ENCODE measurements at regions of chr14 and their contacts with region 1.

Region 1: GRCh38 chr14:77469539-77469938 is 11.6 kb downstream of the AHSA1 start:
- DNase-seq: no peak
- H3K4me3 ChIP-seq: no peak overlapping the region
- H3K27ac ChIP-seq: no peak overlapping the region
- H3K4me1 ChIP-seq: no peaks in the 10 kb centered on the region
- H3K27me3 ChIP-seq: no peaks in the 10 kb centered on the region
- CTCF ChIP-seq: no peak
- POLR2A ChIP-seq: no peak

Region 2: DNA sequence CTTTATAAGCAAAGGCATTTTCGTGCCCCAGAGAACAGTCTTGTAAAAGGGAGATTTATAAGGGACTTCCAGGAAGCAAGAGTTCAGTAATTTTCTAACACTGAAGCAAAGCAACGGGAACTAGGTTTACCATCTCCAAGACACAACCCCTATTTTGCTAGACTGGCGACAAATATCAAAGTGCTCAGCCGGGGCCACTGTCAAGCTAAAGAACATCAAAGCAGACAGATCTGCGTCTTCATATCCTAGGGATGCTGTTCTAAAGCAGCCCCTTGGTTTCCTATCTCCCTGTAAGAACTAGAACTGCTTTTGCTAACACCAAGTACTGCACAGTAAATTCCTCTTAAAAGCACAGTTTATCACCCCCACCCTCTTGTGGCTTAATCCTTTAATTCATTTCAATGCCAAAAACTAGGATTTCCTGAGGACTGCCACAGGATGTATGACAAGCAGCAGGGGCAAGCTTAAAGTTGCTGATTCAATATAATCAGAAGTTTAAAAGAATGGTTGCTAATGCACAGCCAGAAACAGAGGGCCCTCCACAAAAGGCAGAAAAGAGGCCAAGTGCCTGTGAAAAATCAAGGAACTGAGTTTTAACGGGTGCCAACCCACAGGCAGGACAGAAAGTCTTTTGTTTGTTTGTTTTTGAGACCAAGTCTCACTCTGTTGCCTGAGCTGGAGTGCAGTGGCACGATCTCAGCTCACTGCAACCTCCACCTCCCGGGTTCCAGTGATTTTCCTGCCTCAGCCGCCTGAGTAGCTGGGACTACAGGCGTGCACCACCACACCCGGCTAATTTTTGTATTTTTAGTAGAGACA is 73.1 kb after region 1 on chr14:
- intact Hi-C with region 1: loop called (anchors 5 kb)
- DNase-seq: no peak
- H3K4me3 ChIP-seq: no peak overlapping the region
- H3K27ac ChIP-seq: peak overlapping the region; percentile 63 to 73
- H3K4me1 ChIP-seq: peaks cover 24% of the 10 kb centered on the region
- H3K27me3 ChIP-seq: no peaks in the 10 kb centered on the region
- CTCF ChIP-seq: no peak
- POLR2A ChIP-seq: no peak

Region 3: DNA sequence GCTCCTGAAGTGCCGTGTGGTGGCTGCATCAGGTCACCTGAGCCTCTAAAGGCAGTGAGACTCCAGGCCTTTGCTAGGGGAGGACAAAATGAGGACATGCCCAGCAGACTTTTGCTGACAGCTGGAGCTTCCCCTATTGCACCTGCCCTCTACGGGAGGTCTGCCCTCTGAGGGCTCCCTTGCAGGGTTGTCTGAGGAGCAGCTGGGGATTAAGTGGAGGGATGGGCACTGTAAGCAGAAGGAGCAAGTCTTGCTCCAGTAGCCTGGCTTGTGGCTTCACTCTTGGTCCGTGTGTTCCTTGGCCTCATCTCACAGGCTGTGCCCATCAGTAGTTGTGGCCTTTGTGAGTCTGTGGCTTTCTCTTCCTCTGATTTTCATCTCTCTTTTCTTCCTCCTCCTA is 633.7 kb after region 1 on chr14:
- intact Hi-C with region 1: no loop called
- DNase-seq: no peak
- H3K4me3 ChIP-seq: no peak overlapping the region
- H3K27ac ChIP-seq: no peak overlapping the region
- H3K4me1 ChIP-seq: no peaks in the 10 kb centered on the region
- H3K27me3 ChIP-seq: no peaks in the 10 kb centered on the region
- CTCF ChIP-seq: no peak
- POLR2A ChIP-seq: no peak